MCF 10A (cell line): ENCODE measurements at regions of chr19 and their contacts with region 1.

Region 1: DNA sequence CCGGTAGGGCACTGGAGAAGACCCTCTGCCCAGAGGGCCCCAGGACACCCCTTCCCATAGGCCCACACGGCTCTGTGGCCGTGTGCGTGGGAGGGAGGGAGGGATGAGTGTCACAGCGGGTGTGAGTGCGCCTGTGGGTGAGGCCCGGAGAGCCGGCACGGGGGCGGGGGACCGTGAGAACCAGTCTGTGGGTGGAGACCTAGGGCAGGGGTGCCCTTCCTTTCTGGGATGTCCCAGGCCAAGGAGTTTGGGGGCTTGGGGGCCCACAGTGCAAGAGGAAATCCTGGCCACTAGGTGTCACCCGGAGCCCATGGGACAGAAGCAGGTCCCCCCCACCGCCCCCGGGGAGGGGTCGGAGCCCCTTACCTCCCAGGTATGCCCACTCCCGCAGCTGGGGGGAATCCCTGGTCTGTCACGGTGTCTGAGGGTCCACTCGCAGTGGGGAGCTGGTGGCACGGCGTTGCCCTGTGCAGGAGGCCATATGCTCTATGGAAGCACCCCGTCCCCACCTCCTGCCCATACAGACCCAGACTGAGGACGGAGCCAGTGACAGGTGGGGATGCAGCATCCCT is 16.0 kb upstream of the SLC7A10 start:
- DNase-seq: peak; percentile 29
- H3K4me3 Mint-ChIP-seq: no peak overlapping the region
- H3K27ac Mint-ChIP-seq: no peak overlapping the region
- H3K4me1 Mint-ChIP-seq: no peaks in the 10 kb centered on the region
- H3K27me3 Mint-ChIP-seq: peaks cover 9% of the 10 kb centered on the region
- CTCF ChIP-seq: peak; percentile 84

Region 2: GRCh38 chr19:32735936-32736335 is 505.7 kb before region 1 on chr19:
- CTCF ChIA-PET with region 1: no interaction called
- POLR2A ChIA-PET with region 1: no interaction called
- intact Hi-C with region 1: no loop called
- DNase-seq: no peak
- H3K4me3 Mint-ChIP-seq: no peak overlapping the region
- H3K27ac Mint-ChIP-seq: no peak overlapping the region
- H3K4me1 Mint-ChIP-seq: no peaks in the 10 kb centered on the region
- H3K27me3 Mint-ChIP-seq: no peaks in the 10 kb centered on the region
- CTCF ChIP-seq: no peak

Region 3: GRCh38 chr19:33187183-33187540 is 54.5 kb before region 1 on chr19:
- CTCF ChIA-PET with region 1: no interaction called
- POLR2A ChIA-PET with region 1: no interaction called
- intact Hi-C with region 1: no loop called
- DNase-seq: no peak
- H3K4me3 Mint-ChIP-seq: no peak overlapping the region
- H3K27ac Mint-ChIP-seq: no peak overlapping the region
- H3K4me1 Mint-ChIP-seq: no peaks in the 10 kb centered on the region
- H3K27me3 Mint-ChIP-seq: peaks cover 14% of the 10 kb centered on the region
- CTCF ChIP-seq: no peak

Region 4: GRCh38 chr19:33252971-33253370 is 11.4 kb after region 1 on chr19:
- CTCF ChIA-PET with region 1: interaction called, 14 read pairs
- POLR2A ChIA-PET with region 1: no interaction called
- intact Hi-C with region 1: no loop called
- DNase-seq: no peak
- H3K4me3 Mint-ChIP-seq: no peak overlapping the region
- H3K27ac Mint-ChIP-seq: no peak overlapping the region
- H3K4me1 Mint-ChIP-seq: no peaks in the 10 kb centered on the region
- H3K27me3 Mint-ChIP-seq: no peaks in the 10 kb centered on the region
- CTCF ChIP-seq: no peak

Region 5: GRCh38 chr19:33292595-33293441 is 51.2 kb after region 1 on chr19:
- CTCF ChIA-PET with region 1: interaction called, 10 read pairs
- POLR2A ChIA-PET with region 1: no interaction called
- intact Hi-C with region 1: loop called (anchors 5 kb)
- DNase-seq: peak; percentile 87
- H3K4me3 Mint-ChIP-seq: no peak overlapping the region
- H3K27ac Mint-ChIP-seq: peak overlapping the region; percentile 35
- H3K4me1 Mint-ChIP-seq: peaks cover 15% of the 10 kb centered on the region
- H3K27me3 Mint-ChIP-seq: no peaks in the 10 kb centered on the region
- CTCF ChIP-seq: no peak

Region 6: GRCh38 chr19:33302175-33302973 is 60.8 kb after region 1 on chr19 and contains the start of gene CEBPA:
- CTCF ChIA-PET with region 1: interaction called, 12 read pairs
- POLR2A ChIA-PET with region 1: no interaction called
- intact Hi-C with region 1: loop called (anchors 5 kb)
- DNase-seq: peak; percentile 86
- H3K4me3 Mint-ChIP-seq: peak within 1 kb of the TSS; percentile 75
- H3K27ac Mint-ChIP-seq: no peak within 1 kb of the TSS
- H3K4me1 Mint-ChIP-seq: no peaks in the 10 kb centered on the region
- H3K27me3 Mint-ChIP-seq: no peaks in the 10 kb centered on the region
- CTCF ChIP-seq: peak; percentile 39
- total RNA-seq, gene CEBPA: 4.7 and 6.2 TPM in 2 replicates

Region 7: DNA sequence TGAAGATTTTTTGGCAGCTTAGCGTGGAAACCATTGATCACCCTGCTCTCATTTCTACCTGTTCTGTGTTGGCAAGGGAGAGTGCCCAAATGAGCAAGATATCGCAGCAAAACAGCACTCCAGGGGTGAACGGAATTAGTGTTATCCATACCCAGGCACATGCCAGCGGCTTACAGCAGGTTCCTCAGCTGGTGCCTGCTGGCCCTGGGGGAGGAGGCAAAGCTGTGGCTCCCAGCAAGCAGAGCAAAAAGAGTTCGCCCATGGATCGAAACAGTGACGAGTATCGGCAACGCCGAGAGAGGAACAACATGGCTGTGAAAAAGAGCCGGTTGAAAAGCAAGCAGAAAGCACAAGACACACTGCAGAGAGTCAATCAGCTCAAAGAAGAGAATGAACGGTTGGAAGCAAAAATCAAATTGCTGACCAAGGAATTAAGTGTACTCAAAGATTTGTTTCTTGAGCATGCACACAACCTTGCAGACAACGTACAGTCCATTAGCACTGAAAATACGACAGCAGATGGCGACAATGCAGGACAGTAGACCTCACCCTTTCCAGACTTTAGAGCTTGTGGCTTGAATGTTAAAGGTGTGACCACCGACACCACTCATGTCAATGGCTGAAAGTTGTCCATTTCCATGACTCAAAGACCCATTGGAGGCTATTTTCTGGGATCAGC is 137.7 kb after region 1 on chr19:
- CTCF ChIA-PET with region 1: interaction called, 11 read pairs
- POLR2A ChIA-PET with region 1: no interaction called
- intact Hi-C with region 1: no loop called
- DNase-seq: no peak
- H3K4me3 Mint-ChIP-seq: no peak overlapping the region
- H3K27ac Mint-ChIP-seq: peak overlapping the region; percentile 23
- H3K4me1 Mint-ChIP-seq: peaks cover 49% of the 10 kb centered on the region
- H3K27me3 Mint-ChIP-seq: no peaks in the 10 kb centered on the region
- CTCF ChIP-seq: no peak

Region 8: DNA sequence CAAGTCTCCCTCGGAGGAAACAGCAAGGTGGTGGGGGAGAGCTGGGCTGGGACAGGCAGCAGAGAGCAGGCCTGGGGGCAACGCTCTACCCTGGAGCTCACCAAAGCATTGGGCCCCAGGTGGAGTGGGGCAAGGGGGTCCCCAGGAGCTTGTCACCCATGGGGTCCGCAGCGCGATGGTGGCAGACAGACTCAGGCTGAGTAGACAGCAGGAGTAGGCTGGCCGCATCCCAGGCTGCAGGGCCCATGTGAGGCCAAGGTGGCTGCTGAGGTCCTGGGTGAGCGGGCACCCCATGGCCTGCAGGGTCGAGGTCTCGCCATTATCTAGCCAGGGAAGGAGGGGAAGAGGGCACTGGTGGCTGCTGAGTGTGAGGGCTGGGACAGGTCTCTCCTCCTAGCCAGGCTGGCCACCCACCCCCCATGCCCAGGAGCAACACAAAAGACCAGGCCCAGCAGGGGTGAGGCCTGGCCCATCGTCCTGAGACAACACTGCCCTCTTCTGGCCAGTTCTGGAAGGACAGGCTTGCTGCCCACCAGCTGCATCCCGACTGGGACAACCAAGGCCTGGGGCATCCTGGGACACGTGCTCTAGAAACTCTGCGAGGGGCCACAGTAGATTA is 165.0 kb after region 1 on chr19:
- CTCF ChIA-PET with region 1: interaction called, 530 read pairs
- POLR2A ChIA-PET with region 1: no interaction called
- intact Hi-C with region 1: loop called (anchors 1 kb)
- DNase-seq: peak; percentile 73
- H3K4me3 Mint-ChIP-seq: no peak overlapping the region
- H3K27ac Mint-ChIP-seq: no peak overlapping the region
- H3K4me1 Mint-ChIP-seq: no peaks in the 10 kb centered on the region
- H3K27me3 Mint-ChIP-seq: no peaks in the 10 kb centered on the region
- CTCF ChIP-seq: peak; percentile 95